ENCODE measurements at regions of chr11 and their contacts with region 1.

Region 1: GRCh38 chr11:70191495-70192140 is 11.5 kb upstream of the FADD start:
- DNase-seq: peak; percentile 93
- ATAC-seq: peak; percentile 94
- H3K4me3 Mint-ChIP-seq: no peak overlapping the region
- H3K27ac Mint-ChIP-seq: no peak overlapping the region
- H3K4me1 Mint-ChIP-seq: peaks cover 3% of the 10 kb centered on the region
- H3K27me3 Mint-ChIP-seq: no peaks in the 10 kb centered on the region
- CTCF ChIP-seq: peak; percentile 92

Region 2: DNA sequence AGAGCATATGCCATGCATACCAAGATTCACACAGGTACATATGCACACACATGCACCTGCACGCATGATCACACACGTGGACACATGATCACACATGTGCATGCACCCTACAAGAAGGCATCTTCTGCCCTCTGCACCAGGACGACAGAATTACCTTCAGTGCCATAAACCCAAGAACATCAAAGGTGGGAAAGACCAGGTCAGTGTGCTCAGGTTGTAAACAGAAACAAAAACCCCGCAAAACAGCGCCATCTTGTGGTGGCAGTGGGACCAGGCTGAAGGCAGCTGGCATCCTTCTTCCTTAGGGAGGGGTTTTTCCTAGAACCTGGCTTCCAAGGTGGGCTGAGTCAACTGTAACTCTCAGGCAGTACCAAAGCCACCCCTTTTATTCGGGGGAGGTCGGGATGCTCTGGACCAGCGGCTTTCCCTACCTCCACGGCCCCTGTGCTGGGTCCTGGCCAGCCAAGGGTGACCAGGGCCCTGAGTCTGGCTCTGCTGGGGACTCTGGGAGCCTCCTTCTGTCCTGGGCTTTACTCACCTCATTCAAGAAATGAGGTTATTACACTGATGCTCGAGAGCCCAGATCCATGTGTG is 303.0 kb before region 1 on chr11:
- CTCF ChIA-PET with region 1: interaction called, 11 read pairs
- POLR2A ChIA-PET with region 1: no interaction called
- DNase-seq: peak; percentile 92
- ATAC-seq: peak; percentile 58
- H3K4me3 Mint-ChIP-seq: no peak overlapping the region
- H3K27ac Mint-ChIP-seq: no peak overlapping the region
- H3K4me1 Mint-ChIP-seq: peaks cover 35% of the 10 kb centered on the region
- H3K27me3 Mint-ChIP-seq: peaks cover 31% of the 10 kb centered on the region
- CTCF ChIP-seq: peak; percentile 95

Region 3: DNA sequence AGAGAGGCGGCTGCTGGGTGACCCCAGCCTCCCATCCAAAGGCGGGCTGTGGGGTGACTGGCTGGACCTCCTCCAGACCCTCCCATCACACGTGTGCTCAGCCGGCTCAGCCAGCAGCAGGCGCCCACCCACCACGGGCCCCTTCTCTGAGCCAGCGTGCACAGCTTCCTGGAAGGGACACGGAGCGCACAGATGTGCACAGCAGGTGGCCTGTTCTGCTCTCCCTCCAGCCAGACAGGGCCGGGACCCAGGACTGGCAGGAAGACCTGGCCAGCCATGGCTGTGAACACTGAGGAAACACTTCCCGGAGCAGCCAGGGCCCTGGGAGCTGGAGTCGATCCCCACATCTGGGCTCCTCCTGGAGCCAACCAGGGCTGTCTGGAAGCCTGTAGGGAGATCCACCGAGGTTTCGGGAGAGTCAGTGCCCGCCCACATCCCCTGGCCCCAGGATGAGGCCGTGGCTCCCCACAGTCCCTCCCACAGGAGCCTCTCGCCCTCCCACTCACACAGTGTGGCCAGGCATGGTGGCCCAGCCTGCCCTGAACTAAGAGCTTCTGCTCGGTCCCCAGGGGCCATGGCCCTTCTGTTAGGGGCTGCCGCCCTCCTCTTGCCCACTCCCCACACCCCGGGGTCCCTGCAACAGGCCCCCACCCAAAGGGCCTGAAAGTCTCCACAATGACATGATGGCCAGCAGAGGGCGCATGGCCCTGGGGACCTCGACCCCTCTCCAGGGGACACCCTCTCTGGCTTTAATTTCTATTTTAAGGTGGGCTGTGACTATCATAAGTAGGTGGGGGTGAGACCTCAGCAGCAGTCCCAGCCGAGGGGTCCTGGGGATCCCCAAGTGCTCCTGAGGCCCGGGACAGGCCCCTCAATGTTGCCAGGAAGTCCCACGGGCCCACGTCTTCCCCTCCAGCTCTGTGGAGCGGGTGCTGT is 281.8 kb before region 1 on chr11:
- CTCF ChIA-PET with region 1: interaction called, 41 read pairs
- POLR2A ChIA-PET with region 1: no interaction called
- DNase-seq: peak; percentile 54
- ATAC-seq: peak; percentile 39
- H3K4me3 Mint-ChIP-seq: no peak overlapping the region
- H3K27ac Mint-ChIP-seq: no peak overlapping the region
- H3K4me1 Mint-ChIP-seq: no peaks in the 10 kb centered on the region
- H3K27me3 Mint-ChIP-seq: peaks cover 2% of the 10 kb centered on the region; the same call in 1 of the 2 replicates
- CTCF ChIP-seq: peak; percentile 75

Region 4: DNA sequence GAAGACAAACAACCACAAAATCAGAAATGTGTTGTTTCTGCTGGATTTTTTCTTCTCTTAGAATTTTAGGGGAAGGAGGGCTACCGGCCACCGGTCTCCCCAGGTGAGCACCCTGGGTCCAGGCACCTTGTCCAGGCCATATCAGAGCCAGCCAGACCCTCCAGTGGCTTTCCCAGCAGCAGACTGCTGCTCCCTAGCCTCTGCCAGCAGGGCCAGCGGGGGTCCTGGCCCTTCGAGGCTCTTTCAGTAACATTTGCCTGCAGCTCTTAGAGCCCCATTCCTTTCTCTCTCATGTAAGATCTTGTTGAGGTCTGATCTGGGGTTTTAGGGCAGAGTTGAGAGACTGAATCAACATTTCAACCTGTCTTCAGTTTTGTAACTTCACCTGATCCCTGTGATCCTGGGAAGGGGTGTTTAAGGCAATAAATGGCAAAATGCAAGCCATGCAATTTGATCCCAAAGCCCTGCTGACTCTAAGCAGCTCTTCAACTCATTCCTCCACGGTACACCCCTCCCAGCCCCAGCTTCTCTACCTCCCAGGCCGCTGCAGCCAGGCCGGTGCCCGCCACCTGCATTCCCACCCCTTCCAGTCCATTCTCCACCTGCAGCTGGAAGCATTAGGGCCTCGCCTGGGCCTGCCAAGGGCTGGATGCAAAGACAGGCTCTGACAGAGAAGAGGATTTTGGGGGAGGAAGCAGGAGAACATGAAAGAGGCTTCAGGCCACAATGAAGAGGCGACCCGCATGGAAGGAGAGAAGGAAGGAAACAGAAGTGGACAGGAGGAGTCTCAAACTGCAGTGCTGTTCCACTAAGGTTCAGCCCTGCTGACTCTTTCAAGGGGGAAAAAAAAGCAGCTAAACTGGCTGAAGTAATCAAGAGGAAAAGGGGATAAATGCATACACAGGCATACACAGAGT is 259.4 kb before region 1 on chr11:
- CTCF ChIA-PET with region 1: interaction called, 12 read pairs
- POLR2A ChIA-PET with region 1: no interaction called
- DNase-seq: peak; percentile 39
- ATAC-seq: peak; percentile 46
- H3K4me3 Mint-ChIP-seq: no peak overlapping the region
- H3K27ac Mint-ChIP-seq: no peak overlapping the region; the same call in 1 of the 2 replicates
- H3K4me1 Mint-ChIP-seq: peaks cover 24% of the 10 kb centered on the region
- H3K27me3 Mint-ChIP-seq: peaks cover 26% of the 10 kb centered on the region
- CTCF ChIP-seq: no peak

Region 5: GRCh38 chr11:70082829-70083228 is 108.8 kb before region 1 on chr11:
- CTCF ChIA-PET with region 1: interaction called, 12 read pairs
- POLR2A ChIA-PET with region 1: no interaction called
- DNase-seq: no peak
- ATAC-seq: no peak
- H3K4me3 Mint-ChIP-seq: no peak overlapping the region
- H3K27ac Mint-ChIP-seq: no peak overlapping the region
- H3K4me1 Mint-ChIP-seq: peaks cover 3% of the 10 kb centered on the region; the same call in 1 of the 2 replicates
- H3K27me3 Mint-ChIP-seq: peaks cover 29% of the 10 kb centered on the region
- CTCF ChIP-seq: no peak

Region 6: DNA sequence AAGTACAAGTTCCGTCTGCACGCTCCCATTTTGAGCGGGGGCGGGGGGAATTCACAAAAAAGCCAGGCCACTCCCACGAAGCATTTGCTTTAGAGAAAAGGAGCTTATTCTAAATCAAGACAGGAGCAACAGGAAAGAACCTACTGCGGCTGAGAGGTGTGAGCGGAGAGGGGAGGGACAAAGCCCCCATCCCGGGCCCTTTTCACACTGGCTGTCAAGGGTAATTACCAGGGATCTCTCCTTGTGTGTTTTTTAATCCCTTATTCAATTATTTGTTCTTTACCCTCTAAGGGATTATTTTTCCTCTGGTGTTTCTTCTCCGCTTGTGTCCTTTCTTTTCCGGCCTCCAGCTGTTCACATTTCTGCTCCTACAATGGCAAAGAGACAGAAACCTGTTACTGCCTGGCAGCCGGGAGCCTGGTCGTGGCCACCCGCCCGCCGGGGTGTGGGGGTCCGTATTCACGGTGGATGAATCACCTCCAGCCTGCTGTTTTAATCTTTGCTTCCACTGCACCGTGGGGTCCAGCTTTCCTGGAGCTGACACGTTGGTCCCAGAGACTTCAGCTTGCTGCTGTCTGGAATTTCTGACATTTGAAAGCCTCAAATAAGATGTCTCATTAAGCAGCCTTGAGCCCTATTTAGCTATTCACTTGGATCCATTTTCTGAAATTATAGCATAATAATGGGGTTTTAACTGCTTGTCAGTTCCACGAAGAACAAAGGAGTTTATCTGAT is 50.0 kb before region 1 on chr11:
- CTCF ChIA-PET with region 1: interaction called, 13 read pairs
- POLR2A ChIA-PET with region 1: no interaction called
- DNase-seq: no peak
- ATAC-seq: peak; percentile 41
- H3K4me3 Mint-ChIP-seq: peak overlapping the region; percentile 57
- H3K27ac Mint-ChIP-seq: no peak overlapping the region
- H3K4me1 Mint-ChIP-seq: peaks cover 38% of the 10 kb centered on the region
- H3K27me3 Mint-ChIP-seq: peaks cover 28% of the 10 kb centered on the region
- CTCF ChIP-seq: no peak

Region 7: GRCh38 chr11:70176940-70177689 is 14.5 kb before region 1 on chr11:
- CTCF ChIA-PET with region 1: interaction called, 16 read pairs
- POLR2A ChIA-PET with region 1: no interaction called
- DNase-seq: peak; percentile 90
- ATAC-seq: peak; percentile 75
- H3K4me3 Mint-ChIP-seq: no peak overlapping the region
- H3K27ac Mint-ChIP-seq: no peak overlapping the region
- H3K4me1 Mint-ChIP-seq: peaks cover 24% of the 10 kb centered on the region
- H3K27me3 Mint-ChIP-seq: no peaks in the 10 kb centered on the region
- CTCF ChIP-seq: peak; percentile 90

Region 8: DNA sequence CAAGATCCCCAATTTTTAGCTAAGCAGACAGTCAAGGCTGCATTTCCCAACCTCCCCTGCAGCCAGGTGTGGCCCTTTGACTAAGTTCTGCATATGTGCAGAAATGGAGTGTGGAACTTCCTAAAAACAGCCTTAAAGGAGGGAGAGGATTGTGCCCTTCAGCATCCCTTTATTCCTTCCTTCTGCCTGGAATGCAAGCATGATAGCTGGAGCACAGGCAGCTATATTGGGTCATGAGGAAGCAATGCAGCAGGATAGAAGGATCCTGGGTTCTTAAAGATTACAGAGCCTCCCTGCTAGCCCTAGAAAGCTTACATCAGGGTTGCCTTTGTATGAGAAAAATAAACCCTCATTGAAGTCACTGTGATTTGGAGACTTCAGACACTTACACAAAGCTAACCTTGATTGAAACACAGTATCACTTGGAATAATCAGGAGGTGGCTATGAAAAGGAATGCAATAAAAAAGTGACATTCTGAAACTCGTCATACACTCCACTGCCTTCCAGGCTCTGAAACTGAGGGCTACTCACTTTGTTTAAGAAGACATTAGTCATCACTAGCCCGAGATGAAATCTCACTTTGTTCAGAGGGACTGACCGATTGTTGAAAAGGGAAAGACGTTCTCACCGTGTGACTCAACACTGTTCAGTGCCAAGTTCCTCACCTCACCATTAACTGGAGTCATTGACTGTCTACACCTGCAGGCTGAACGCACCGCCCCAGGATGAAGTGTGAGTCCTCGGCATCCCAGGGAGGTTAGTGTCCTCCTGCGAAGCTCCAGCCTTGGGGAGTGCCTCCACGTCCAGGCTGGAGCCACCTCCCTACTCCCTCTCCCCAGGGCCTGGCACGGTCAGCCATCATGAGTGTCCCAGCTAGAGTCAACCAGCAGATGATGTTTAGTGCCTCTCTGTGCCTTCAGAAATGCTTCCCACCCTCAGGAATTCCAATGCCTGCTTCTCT is 41.7 kb after region 1 on chr11:
- CTCF ChIA-PET with region 1: no interaction called
- POLR2A ChIA-PET with region 1: no interaction called
- DNase-seq: no peak
- ATAC-seq: no peak
- H3K4me3 Mint-ChIP-seq: no peak overlapping the region
- H3K27ac Mint-ChIP-seq: no peak overlapping the region; the same call in 1 of the 2 replicates
- H3K4me1 Mint-ChIP-seq: no peaks in the 10 kb centered on the region
- H3K27me3 Mint-ChIP-seq: no peaks in the 10 kb centered on the region
- CTCF ChIP-seq: no peak

Measured in WTC11 (cell line).